Activated CD8-positive, alpha-beta T cell treated with anti-CD3 and anti-CD28 coated beads, Interleukin-2, amount 10 ng/mL, durations not matched to agents 7 days and 5 days (primary cell): ENCODE measurements at regions of chr17 and their contacts with region 1.

Region 1: GRCh38 chr17:20226814-20227482 is 217.8 kb downstream of the SPECC1 start:
- DNase-seq: peak; percentile 85
- ATAC-seq: peak; percentile 98
- H3K4me3 Mint-ChIP-seq: no peak overlapping the region
- H3K27ac Mint-ChIP-seq: no peak overlapping the region
- H3K4me1 Mint-ChIP-seq: peaks cover 7% of the 10 kb centered on the region
- H3K27me3 Mint-ChIP-seq: peaks cover 7% of the 10 kb centered on the region

Region 2: DNA sequence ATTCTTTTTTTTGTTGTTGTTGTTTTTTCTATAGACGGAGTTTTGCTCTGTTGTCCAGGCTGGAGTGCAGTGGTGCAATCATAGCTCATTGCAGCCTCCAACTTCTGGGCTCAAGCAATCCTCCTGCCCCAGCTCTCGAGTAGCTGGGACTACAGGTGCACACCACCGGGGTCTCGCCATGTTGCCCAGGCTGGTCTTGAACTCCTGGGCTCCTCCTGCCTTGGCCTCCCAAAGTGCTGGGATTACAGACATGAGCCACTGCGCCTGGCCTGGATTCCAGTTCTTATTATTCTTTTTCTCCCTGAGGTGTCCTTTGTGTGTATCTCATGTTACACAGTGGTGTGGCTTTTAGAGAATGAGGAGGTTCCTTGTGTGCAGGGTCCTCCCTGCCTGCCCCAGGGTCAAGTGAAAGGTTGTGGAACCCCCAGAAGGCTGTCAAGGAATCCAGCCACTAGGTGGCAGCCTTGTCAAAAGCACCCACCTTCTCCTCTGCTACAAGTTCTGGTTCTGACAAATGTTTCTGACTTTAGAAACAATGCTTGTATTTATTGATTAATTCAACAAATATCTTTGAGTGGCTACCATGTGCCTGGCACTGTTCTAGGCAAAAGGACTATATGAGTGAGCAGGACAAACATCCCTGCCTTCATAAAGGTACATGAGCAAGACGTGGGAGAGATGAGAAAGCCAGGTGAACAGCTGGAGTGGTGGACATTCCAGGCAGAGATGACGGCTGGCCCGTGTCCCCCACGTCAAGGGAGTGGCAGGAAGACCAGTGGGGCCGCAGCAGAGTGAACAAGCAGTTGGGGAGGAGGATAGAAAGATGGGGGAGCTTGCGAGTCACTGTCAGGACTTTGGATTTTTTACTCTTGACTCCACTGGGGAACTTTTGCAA is 105.3 kb before region 1 on chr17:
- CTCF ChIA-PET with region 1: interaction called, 10 read pairs
- POLR2A ChIA-PET with region 1: no interaction called
- DNase-seq: peak; percentile 76
- ATAC-seq: peak; percentile 75
- H3K4me3 Mint-ChIP-seq: no peak overlapping the region
- H3K27ac Mint-ChIP-seq: no peak overlapping the region
- H3K4me1 Mint-ChIP-seq: peaks cover 2% of the 10 kb centered on the region
- H3K27me3 Mint-ChIP-seq: peaks cover 9% of the 10 kb centered on the region

Region 3: DNA sequence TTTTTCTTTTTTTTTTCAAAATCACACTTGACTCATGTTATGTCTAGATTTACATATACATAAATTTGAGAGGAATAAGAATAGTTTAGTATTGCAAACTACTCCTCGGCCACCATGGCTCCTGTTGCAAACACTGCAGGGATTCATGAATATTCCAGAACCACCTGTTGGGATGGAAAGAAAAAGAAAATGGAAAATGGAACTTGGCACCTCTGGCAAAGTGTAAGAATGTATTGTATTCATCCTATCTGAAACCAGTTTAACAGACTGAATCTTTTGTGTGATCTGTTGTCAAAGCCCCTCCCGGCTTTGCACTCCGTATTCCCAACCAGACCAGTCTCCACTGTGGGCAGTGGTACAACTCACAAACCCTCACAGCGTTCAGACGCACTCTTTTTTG is 93.4 kb before region 1 on chr17:
- CTCF ChIA-PET with region 1: no interaction called
- POLR2A ChIA-PET with region 1: no interaction called
- DNase-seq: no peak
- ATAC-seq: no peak
- H3K4me3 Mint-ChIP-seq: no peak overlapping the region
- H3K27ac Mint-ChIP-seq: no peak overlapping the region
- H3K4me1 Mint-ChIP-seq: no peaks in the 10 kb centered on the region
- H3K27me3 Mint-ChIP-seq: peaks cover 2% of the 10 kb centered on the region

Region 4: DNA sequence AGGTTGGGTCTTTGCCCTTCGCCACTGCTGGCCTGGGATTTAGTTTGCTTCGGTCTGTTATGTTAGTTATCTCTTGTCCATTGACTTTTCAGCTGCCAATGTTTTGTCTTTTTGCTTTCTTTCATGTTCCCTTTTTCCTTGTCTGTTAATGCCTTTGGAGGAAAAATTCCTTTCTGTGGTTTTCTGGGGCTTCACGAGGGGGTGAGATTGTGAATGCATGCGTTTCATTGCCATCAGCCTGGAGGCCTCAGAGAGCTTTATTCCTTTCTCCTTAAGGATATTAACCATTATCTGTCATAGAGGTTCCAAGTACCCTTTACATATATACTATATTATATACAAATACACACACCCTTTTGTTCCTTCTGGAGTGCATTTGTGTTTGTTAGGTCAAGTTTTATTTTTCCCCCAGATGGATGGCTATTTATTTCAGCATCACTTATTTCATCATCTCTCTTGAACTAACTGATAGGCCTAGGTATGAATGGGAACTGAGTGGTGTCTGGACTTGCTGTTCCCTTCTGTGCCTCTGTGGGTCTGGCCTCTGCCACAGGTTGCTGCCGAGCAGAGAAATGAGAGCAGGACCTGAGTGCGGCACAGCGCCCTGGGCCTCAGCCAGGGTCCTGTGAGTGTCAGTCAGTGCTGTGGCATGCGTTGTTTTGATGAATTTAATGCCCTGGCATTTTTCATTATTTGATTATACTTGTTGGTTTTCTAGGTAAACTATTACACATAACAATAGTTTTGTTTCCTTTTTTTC is 47.0 kb after region 1 on chr17:
- CTCF ChIA-PET with region 1: interaction called, 21 read pairs
- POLR2A ChIA-PET with region 1: no interaction called
- DNase-seq: peak; percentile 40
- ATAC-seq: peak; percentile 64
- H3K4me3 Mint-ChIP-seq: peak overlapping the region; percentile 52
- H3K27ac Mint-ChIP-seq: peak overlapping the region; percentile 86
- H3K4me1 Mint-ChIP-seq: peaks cover 79% of the 10 kb centered on the region
- H3K27me3 Mint-ChIP-seq: no peaks in the 10 kb centered on the region

Region 5: GRCh38 chr17:20315821-20316220 is 88.9 kb after region 1 on chr17:
- CTCF ChIA-PET with region 1: interaction called, 36 read pairs
- POLR2A ChIA-PET with region 1: interaction called, 3 read pairs
- DNase-seq: no peak
- ATAC-seq: no peak
- H3K4me3 Mint-ChIP-seq: no peak overlapping the region
- H3K27ac Mint-ChIP-seq: no peak overlapping the region
- H3K4me1 Mint-ChIP-seq: peaks cover 2% of the 10 kb centered on the region
- H3K27me3 Mint-ChIP-seq: no peaks in the 10 kb centered on the region